A673 (cell line): ENCODE measurements at regions of chr2 and their contacts with region 1.

Region 1: GRCh38 chr2:18171191-18172139 is 293.0 kb downstream of the KCNS3 start:
- DNase-seq: peak; percentile 63
- H3K4me3 ChIP-seq: no peak overlapping the region
- H3K27ac ChIP-seq: peak overlapping the region; percentile 50
- H3K4me1 ChIP-seq: peaks cover 40% of the 10 kb centered on the region
- H3K27me3 ChIP-seq: no peaks in the 10 kb centered on the region
- CTCF ChIP-seq: no peak

Region 2: GRCh38 chr2:17879101-17879912 is 292.2 kb before region 1 on chr2:
- CTCF ChIA-PET with region 1: no interaction called
- POLR2A ChIA-PET with region 1: no interaction called
- intact Hi-C with region 1: loop called (anchors 5 kb)
- DNase-seq: peak; percentile 94
- H3K4me3 ChIP-seq: peak overlapping the region; percentile 83
- H3K27ac ChIP-seq: no peak overlapping the region
- H3K4me1 ChIP-seq: peaks cover 4% of the 10 kb centered on the region
- H3K27me3 ChIP-seq: no peaks in the 10 kb centered on the region
- CTCF ChIP-seq: peak; percentile 55

Region 3: GRCh38 chr2:18378020-18378653 is 206.7 kb after region 1 on chr2:
- CTCF ChIA-PET with region 1: interaction called, 6 read pairs
- POLR2A ChIA-PET with region 1: interaction called, 4 read pairs
- intact Hi-C with region 1: loop called (anchors 5 kb)
- DNase-seq: peak; percentile 82
- H3K4me3 ChIP-seq: no peak overlapping the region
- H3K27ac ChIP-seq: peak overlapping the region; percentile 63
- H3K4me1 ChIP-seq: peaks cover 58% of the 10 kb centered on the region
- H3K27me3 ChIP-seq: no peaks in the 10 kb centered on the region
- CTCF ChIP-seq: peak; percentile 87